ENCODE measurements at regions of chr2 and their contacts with region 1.

Region 1: GRCh38 chr2:168948621-168949212 is 47.6 kb downstream of the G6PC2 start:
- DNase-seq: no peak
- CTCF ChIP-seq: peak; percentile 48

Region 2: DNA sequence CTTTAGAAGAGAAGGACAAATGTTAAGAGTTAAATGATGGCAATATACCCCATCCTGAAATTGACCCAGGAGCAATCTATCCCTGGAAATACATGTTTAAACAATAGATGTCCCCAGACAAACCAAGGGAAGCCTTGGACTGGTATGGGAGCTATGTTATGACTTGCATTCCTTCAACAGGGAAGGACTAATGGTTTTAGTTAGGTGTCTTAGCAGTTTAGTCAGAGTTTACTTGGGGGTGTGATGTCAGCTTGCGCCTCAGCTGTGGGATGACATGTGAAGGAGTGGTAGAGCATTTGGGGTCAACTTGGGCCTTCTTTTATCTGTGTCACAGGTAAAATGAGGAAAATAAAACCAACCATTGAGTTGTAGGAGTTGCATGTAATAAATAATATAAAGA is 95.2 kb before region 1 on chr2:
- CTCF ChIA-PET with region 1: no interaction called
- POLR2A ChIA-PET with region 1: no interaction called
- DNase-seq: no peak
- CTCF ChIP-seq: no peak

Region 3: DNA sequence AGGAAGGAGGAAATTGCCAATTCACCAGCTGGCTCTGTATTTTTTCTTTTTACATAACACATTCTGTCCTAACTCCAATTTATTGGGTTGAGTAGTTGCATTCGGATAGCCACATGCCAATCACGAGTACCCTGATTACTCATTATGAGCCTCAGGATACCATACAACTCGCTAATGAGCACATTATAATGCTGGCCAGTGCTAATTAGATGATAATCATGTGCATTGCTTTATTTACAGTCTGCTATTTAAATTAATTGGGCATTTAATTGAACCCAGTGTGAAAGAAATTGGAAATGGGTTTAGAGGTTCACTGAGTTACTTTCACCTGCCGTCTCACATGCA is 32.4 kb before region 1 on chr2:
- CTCF ChIA-PET with region 1: no interaction called
- POLR2A ChIA-PET with region 1: no interaction called
- DNase-seq: no peak
- CTCF ChIP-seq: no peak

Region 4: DNA sequence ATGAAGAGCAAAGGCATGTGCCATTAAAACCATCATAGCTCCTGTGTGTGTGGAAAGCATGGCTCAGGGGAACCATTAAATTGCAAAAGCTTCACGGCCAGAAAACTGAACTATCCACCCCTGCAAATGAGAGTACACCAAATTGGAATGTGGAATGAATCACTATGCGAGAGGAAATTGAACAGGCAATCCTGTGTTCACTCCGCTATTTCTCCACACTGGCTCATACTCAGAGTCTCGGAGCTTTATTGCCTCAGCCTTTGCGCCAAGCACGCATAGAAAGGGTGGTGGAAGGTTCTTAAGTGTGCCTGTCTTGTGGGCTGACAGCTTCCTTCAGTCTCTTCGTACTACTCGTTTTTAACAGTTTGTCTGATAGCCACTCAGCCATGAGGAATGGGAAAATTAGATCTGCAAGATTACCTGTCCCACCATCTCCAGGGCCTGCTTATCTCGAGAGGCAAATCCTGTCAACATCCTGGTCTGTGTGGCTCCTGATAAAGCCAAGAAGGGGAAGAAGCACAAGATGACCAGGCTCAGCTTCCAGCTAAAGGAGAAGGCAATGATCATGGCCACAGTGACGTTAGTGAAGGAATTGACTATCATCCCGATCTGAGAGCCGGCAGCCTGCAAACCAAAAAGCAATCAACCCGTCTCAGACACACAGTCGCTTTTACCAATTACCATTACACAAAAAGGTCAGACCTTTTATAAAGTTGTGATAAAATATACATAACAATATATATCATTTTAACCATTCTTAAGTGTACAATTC is 12.7 kb before region 1 on chr2:
- CTCF ChIA-PET with region 1: interaction called, 13 read pairs
- POLR2A ChIA-PET with region 1: no interaction called
- DNase-seq: no peak
- CTCF ChIP-seq: no peak

Region 5: GRCh38 chr2:168961450-168962229 is 12.9 kb after region 1 on chr2:
- CTCF ChIA-PET with region 1: interaction called, 11 read pairs
- POLR2A ChIA-PET with region 1: no interaction called
- DNase-seq: peak; percentile 26
- CTCF ChIP-seq: peak; percentile 71

Region 6: GRCh38 chr2:169221745-169222369 is 273.1 kb after region 1 on chr2:
- CTCF ChIA-PET with region 1: no interaction called
- POLR2A ChIA-PET with region 1: no interaction called
- DNase-seq: no peak
- CTCF ChIP-seq: no peak

Measured in GM10248 (cell line).